Activated CD4-positive, alpha-beta T cell treated with anti-CD3 and anti-CD28 coated beads for 36 hours (primary cell): ENCODE measurements at regions of chr17 and their contacts with region 1.

Region 1: GRCh38 chr17:78840725-78841611 is at the start of gene USP36:
- DNase-seq: peak; percentile 100
- ATAC-seq: peak; percentile 89
- H3K4me3 Mint-ChIP-seq: peak within 1 kb of the TSS; percentile 86
- H3K27ac Mint-ChIP-seq: peak within 1 kb of the TSS; percentile 96
- H3K4me1 Mint-ChIP-seq: peaks cover 44% of the 10 kb centered on the region
- H3K27me3 Mint-ChIP-seq: no peaks in the 10 kb centered on the region
- total RNA-seq, gene USP36: 90.1 to 92.5 TPM

Region 2: GRCh38 chr17:78484300-78485246 is 356.4 kb before region 1 on chr17:
- CTCF ChIA-PET with region 1: no interaction called
- POLR2A ChIA-PET with region 1: no interaction called
- intact Hi-C with region 1: loop called in 1 of 2 experiments (anchors 1 kb)
- DNase-seq: peak; percentile 80
- ATAC-seq: peak; percentile 98
- H3K4me3 Mint-ChIP-seq: peak overlapping the region; percentile 67
- H3K27ac Mint-ChIP-seq: peak overlapping the region; percentile 28
- H3K4me1 Mint-ChIP-seq: peaks cover 7% of the 10 kb centered on the region
- H3K27me3 Mint-ChIP-seq: peaks cover 3% of the 10 kb centered on the region

Region 3: GRCh38 chr17:78589885-78590284 is 251.1 kb before region 1 on chr17:
- CTCF ChIA-PET with region 1: no interaction called
- POLR2A ChIA-PET with region 1: no interaction called
- intact Hi-C with region 1: loop called in 1 of 2 experiments (anchors 5 kb)
- DNase-seq: no peak
- ATAC-seq: no peak
- H3K4me3 Mint-ChIP-seq: no peak overlapping the region
- H3K27ac Mint-ChIP-seq: no peak overlapping the region
- H3K4me1 Mint-ChIP-seq: peaks cover 7% of the 10 kb centered on the region
- H3K27me3 Mint-ChIP-seq: peaks cover 2% of the 10 kb centered on the region

Region 4: GRCh38 chr17:78818932-78819331 is 22.0 kb before region 1 on chr17:
- CTCF ChIA-PET with region 1: interaction called, 6 read pairs
- POLR2A ChIA-PET with region 1: interaction called, 3 read pairs
- intact Hi-C with region 1: loop called (anchors 1 kb)
- DNase-seq: peak; percentile 64
- ATAC-seq: peak; percentile 28
- H3K4me3 Mint-ChIP-seq: peak overlapping the region; percentile 30
- H3K27ac Mint-ChIP-seq: peak overlapping the region; percentile 90
- H3K4me1 Mint-ChIP-seq: peaks cover 66% of the 10 kb centered on the region
- H3K27me3 Mint-ChIP-seq: no peaks in the 10 kb centered on the region

Region 5: GRCh38 chr17:79009397-79010308 is 168.7 kb after region 1 on chr17 and contains the start of gene CANT1:
- CTCF ChIA-PET with region 1: no interaction called
- POLR2A ChIA-PET with region 1: no interaction called
- intact Hi-C with region 1: loop called in 1 of 2 experiments (anchors 1 kb)
- DNase-seq: peak; percentile 90
- ATAC-seq: peak; percentile 97
- H3K4me3 Mint-ChIP-seq: peak within 1 kb of the TSS; percentile 78
- H3K27ac Mint-ChIP-seq: peak within 1 kb of the TSS; percentile 88
- H3K4me1 Mint-ChIP-seq: peaks cover 40% of the 10 kb centered on the region
- H3K27me3 Mint-ChIP-seq: peaks cover 2% of the 10 kb centered on the region
- total RNA-seq, gene CANT1: 44.0 to 52.9 TPM